GM12878 (cell line): ENCODE measurements at regions of chr4 and their contacts with region 1.

Region 1: DNA sequence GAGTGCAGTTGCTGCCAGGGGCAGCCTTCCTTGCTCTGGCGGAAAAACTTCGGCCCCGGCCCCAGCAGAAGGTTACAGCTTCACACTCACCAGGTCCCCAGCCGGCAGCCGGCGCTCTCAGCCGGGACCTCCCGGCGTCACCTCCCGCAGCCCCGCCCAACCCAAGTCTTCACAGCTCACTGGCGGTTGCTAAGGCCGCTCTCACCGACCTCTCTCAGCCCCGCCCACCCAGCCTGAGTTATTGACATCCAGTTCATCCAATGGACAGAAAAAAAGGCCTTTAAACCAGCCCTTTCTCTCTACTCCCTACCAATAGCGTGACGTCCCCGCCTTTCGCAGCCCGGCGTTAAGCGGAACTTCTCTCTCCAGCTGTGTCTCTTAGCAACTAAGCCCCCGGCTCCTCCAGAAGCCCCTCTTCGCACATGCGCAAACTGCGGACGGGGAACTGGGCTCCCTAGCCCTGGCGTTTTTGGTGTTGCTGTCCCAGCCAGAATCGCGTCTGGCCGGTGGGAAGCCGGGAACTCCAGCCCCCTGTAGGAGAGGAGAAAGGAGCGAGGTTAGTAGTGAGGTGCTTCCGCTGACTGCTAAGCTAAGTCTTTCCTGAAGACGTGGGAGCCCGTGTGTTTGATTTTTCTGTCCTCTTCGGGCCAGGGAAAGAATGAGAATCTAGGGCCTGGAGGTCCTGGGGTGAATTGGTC is at the start of gene BBS12:
- DNase-seq: peak; percentile 97
- ATAC-seq: peak; percentile 99
- H3K4me3 ChIP-seq: peak within 1 kb of the TSS; percentile 89
- H3K27ac ChIP-seq: peak within 1 kb of the TSS; percentile 27; the same call in 1 of the 2 replicates
- H3K4me1 ChIP-seq: no peaks in the 10 kb centered on the region
- H3K27me3 ChIP-seq: no peaks in the 10 kb centered on the region
- CTCF ChIP-seq: peak; percentile 46 to 56 (median 50); a peak in 5 of 6 replicates
- EP300 ChIP-seq: no peak
- POLR2A ChIP-seq: peak; percentile 45; the same call in 1 of the 2 replicates
- RAD21 ChIP-seq: peak; percentile 27; the same call in 1 of the 2 replicates
- polyA plus RNA-seq, gene BBS12: 0.40 to 0.44 TPM

Region 2: GRCh38 chr4:122687531-122688061 is 44.9 kb before region 1 on chr4:
- CTCF ChIA-PET with region 1: no interaction called
- POLR2A ChIA-PET with region 1: no interaction called
- RAD21 ChIA-PET with region 1: no interaction called
- SMC1A ChIA-PET with region 1: no interaction called
- in situ Hi-C with region 1: no loop called
- intact Hi-C with region 1: no loop called
- DNase-seq: no peak
- ATAC-seq: peak; percentile 62
- H3K4me3 ChIP-seq: 0 out of 2 replicates have a peak overlapping the region, but pooled peaks have one; percentile 23
- H3K27ac ChIP-seq: peak overlapping the region; percentile 50
- H3K4me1 ChIP-seq: peaks cover 30% of the 10 kb centered on the region
- H3K27me3 ChIP-seq: no peaks in the 10 kb centered on the region
- CTCF ChIP-seq: no peak
- EP300 ChIP-seq: no peak
- POLR2A ChIP-seq: no peak
- RAD21 ChIP-seq: no peak

Region 3: GRCh38 chr4:122716825-122717448 is 15.5 kb before region 1 on chr4:
- CTCF ChIA-PET with region 1: interaction called, 26 read pairs
- POLR2A ChIA-PET with region 1: interaction called, 4 read pairs
- RAD21 ChIA-PET with region 1: interaction called, 7 read pairs
- SMC1A ChIA-PET with region 1: interaction called, 6 read pairs
- in situ Hi-C with region 1: no loop called
- intact Hi-C with region 1: no loop called
- DNase-seq: no peak
- ATAC-seq: peak; percentile 97
- H3K4me3 ChIP-seq: no peak overlapping the region
- H3K27ac ChIP-seq: no peak overlapping the region
- H3K4me1 ChIP-seq: peaks cover 2% of the 10 kb centered on the region; the same call in 1 of the 2 replicates
- H3K27me3 ChIP-seq: no peaks in the 10 kb centered on the region; a peak in 1 of 4 replicates
- CTCF ChIP-seq: peak; percentile 85 to 87 (median 87)
- EP300 ChIP-seq: no peak
- POLR2A ChIP-seq: no peak
- RAD21 ChIP-seq: peak; percentile 85

Region 4: DNA sequence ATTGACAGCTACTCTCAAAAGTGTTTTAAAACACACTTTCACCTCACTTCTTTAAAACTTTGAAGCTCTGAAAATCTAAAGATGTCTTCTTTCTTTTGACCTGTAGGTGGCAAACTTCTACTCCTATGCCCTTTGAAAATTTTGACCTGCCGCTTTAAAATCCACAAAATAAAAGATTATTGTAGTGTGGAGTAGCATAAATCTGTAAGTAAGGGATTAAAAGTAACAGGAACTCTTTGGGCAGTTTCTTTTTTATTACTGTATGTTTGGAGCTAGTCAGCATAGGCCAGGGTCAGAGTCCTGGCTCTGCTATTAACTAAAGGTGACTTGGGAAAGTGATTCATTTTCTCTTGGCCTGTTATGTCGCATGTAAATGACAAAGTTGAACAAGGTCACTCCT is 25.6 kb after region 1 on chr4:
- CTCF ChIA-PET with region 1: interaction called, 9 read pairs
- POLR2A ChIA-PET with region 1: no interaction called
- RAD21 ChIA-PET with region 1: interaction called, 11 read pairs
- SMC1A ChIA-PET with region 1: interaction called, 6 read pairs
- in situ Hi-C with region 1: no loop called
- intact Hi-C with region 1: no loop called
- DNase-seq: no peak
- ATAC-seq: peak; percentile 56
- H3K4me3 ChIP-seq: no peak overlapping the region
- H3K27ac ChIP-seq: no peak overlapping the region
- H3K4me1 ChIP-seq: peaks cover 6% of the 10 kb centered on the region; the same call in 1 of the 2 replicates
- H3K27me3 ChIP-seq: no peaks in the 10 kb centered on the region
- CTCF ChIP-seq: peak; percentile 43 to 60 (median 55); a peak in 5 of 6 replicates
- EP300 ChIP-seq: no peak
- POLR2A ChIP-seq: no peak
- RAD21 ChIP-seq: peak; percentile 76

Region 5: GRCh38 chr4:122798101-122798500 is 65.6 kb after region 1 on chr4:
- CTCF ChIA-PET with region 1: no interaction called
- POLR2A ChIA-PET with region 1: no interaction called
- RAD21 ChIA-PET with region 1: no interaction called
- SMC1A ChIA-PET with region 1: no interaction called
- in situ Hi-C with region 1: no loop called
- intact Hi-C with region 1: no loop called
- DNase-seq: no peak
- ATAC-seq: peak; percentile 45
- H3K4me3 ChIP-seq: no peak overlapping the region
- H3K27ac ChIP-seq: no peak overlapping the region
- H3K4me1 ChIP-seq: peaks cover 3% of the 10 kb centered on the region
- H3K27me3 ChIP-seq: no peaks in the 10 kb centered on the region; a peak in 1 of 4 replicates
- CTCF ChIP-seq: no peak
- EP300 ChIP-seq: no peak
- POLR2A ChIP-seq: no peak
- RAD21 ChIP-seq: no peak

Region 6: GRCh38 chr4:122922877-122923511 is 190.5 kb after region 1 on chr4:
- CTCF ChIA-PET with region 1: interaction called, 3 read pairs
- POLR2A ChIA-PET with region 1: no interaction called
- RAD21 ChIA-PET with region 1: interaction called, 4 read pairs
- SMC1A ChIA-PET with region 1: interaction called, 5 read pairs
- in situ Hi-C with region 1: no loop called
- intact Hi-C with region 1: loop called (anchors 1 kb)
- DNase-seq: peak; percentile 53
- ATAC-seq: peak; percentile 98
- H3K4me3 ChIP-seq: peak overlapping the region; percentile 95
- H3K27ac ChIP-seq: peak overlapping the region; percentile 64
- H3K4me1 ChIP-seq: peaks cover 6% of the 10 kb centered on the region
- H3K27me3 ChIP-seq: no peaks in the 10 kb centered on the region
- CTCF ChIP-seq: no peak
- EP300 ChIP-seq: peak in 1 of 2 experiments; percentile 32; a peak in 1 of 4 replicates
- POLR2A ChIP-seq: peak; percentile 41; the same call in 1 of the 2 replicates
- RAD21 ChIP-seq: no peak

Region 7: DNA sequence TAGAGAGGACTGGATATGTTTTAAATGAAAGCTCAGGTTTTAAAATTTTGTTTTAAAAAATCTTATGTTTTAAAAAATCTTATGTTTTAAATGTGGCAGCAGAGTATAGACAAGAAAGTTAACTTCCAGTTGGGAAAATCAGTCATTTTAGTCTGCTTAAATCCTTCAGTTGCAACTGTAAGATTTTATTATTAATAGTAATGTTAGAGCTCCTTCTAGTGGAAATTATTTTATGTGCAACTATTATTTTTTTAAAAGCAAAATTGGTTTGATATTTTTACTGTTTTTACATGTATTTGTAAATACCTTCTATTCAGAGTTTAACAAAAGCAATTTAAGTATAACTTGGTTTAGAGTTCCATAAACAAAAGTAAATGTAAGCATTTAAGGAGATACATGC is 198.4 kb after region 1 on chr4:
- CTCF ChIA-PET with region 1: interaction called, 22 read pairs
- POLR2A ChIA-PET with region 1: no interaction called
- RAD21 ChIA-PET with region 1: interaction called, 10 read pairs
- SMC1A ChIA-PET with region 1: interaction called, 4 read pairs
- in situ Hi-C with region 1: no loop called
- intact Hi-C with region 1: no loop called
- DNase-seq: no peak
- ATAC-seq: no peak
- H3K4me3 ChIP-seq: no peak overlapping the region
- H3K27ac ChIP-seq: no peak overlapping the region
- H3K4me1 ChIP-seq: no peaks in the 10 kb centered on the region
- H3K27me3 ChIP-seq: no peaks in the 10 kb centered on the region
- CTCF ChIP-seq: peak in 2 of 3 experiments; percentile 21 to 46; a peak in 3 of 6 replicates
- EP300 ChIP-seq: no peak
- POLR2A ChIP-seq: no peak
- RAD21 ChIP-seq: peak; percentile 20; the same call in 1 of the 2 replicates

Region 8: DNA sequence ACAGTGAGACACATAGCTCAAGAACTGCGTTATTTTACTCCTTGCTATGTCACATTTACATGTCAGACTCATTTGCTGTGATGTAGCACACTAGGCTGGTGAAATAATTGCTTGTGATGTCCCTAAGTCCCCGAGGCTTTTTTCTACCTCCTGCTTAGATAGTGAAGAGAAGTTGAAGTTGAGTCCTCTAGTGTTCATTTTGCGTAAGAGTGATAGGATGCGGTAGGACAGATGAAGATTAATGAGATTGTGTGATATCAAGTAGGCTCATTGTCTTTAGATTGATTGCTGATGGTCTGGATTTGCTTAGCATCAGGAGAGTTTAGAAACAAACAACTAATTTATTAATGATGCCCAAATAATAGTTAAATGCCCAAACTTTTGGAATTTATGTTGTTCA is 363.6 kb after region 1 on chr4:
- CTCF ChIA-PET with region 1: no interaction called
- POLR2A ChIA-PET with region 1: no interaction called
- RAD21 ChIA-PET with region 1: no interaction called
- SMC1A ChIA-PET with region 1: no interaction called
- in situ Hi-C with region 1: no loop called
- intact Hi-C with region 1: no loop called
- DNase-seq: no peak
- ATAC-seq: no peak
- H3K4me3 ChIP-seq: no peak overlapping the region
- H3K27ac ChIP-seq: no peak overlapping the region
- H3K4me1 ChIP-seq: no peaks in the 10 kb centered on the region
- H3K27me3 ChIP-seq: no peaks in the 10 kb centered on the region
- CTCF ChIP-seq: no peak
- EP300 ChIP-seq: no peak
- POLR2A ChIP-seq: no peak
- RAD21 ChIP-seq: no peak

Region 9: DNA sequence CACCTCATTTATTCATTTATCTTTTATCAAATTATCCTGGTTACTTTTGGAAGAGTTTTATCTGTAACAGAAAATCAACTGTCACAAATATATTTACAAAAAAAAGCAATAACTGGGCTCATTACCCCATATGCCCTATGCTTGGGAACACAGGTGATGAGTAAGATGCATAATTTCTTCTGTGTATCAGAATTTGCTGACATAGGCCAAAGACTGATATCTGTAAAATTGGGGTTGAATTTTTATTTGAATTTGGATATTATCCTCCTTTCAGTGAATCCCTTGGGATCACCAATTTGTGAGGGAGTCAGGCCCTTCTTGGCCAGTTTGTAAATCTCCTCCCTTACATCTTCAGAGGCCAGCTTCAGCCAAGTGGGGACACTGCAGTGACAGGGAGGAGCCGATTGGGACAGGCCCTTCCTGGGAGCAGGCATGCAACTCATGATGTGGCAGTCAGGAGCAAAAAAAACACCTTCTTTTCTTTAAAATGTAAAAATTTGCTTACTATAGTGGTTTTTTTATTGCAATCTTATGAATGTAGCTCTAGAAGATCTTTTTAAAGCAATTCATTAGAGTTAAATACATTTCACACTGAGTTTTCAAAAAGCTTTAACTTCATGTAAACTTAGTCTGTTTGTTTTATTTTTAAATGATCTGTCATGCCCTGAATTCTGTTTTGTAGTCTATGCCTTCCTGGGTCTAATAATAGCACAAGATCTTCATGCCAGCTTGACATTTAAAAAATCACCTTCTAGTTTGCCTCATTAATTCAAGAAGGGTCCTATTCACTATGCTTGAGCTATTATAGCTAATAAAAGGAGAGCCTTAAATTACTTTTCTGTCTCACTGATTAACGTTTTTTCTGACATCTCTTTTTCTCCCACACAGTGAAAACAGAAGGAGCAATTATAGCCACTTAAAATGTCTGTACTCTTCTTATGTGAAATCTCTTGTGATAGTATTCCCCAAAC is 527.5 kb after region 1 on chr4:
- CTCF ChIA-PET with region 1: no interaction called
- POLR2A ChIA-PET with region 1: no interaction called
- RAD21 ChIA-PET with region 1: no interaction called
- SMC1A ChIA-PET with region 1: no interaction called
- in situ Hi-C with region 1: no loop called
- intact Hi-C with region 1: no loop called
- DNase-seq: no peak
- ATAC-seq: no peak
- H3K4me3 ChIP-seq: no peak overlapping the region
- H3K27ac ChIP-seq: no peak overlapping the region
- H3K4me1 ChIP-seq: peaks cover 4% of the 10 kb centered on the region
- H3K27me3 ChIP-seq: no peaks in the 10 kb centered on the region
- CTCF ChIP-seq: no peak
- EP300 ChIP-seq: no peak
- POLR2A ChIP-seq: no peak
- RAD21 ChIP-seq: no peak